ENCODE measurements at regions of chr6 and their contacts with region 1.

Region 1: GRCh38 chr6:43386492-43386891 is 17.0 kb upstream of the ZNF318 start:
- DNase-seq: no peak
- H3K4me3 Mint-ChIP-seq: no peak overlapping the region
- H3K27ac Mint-ChIP-seq: no peak overlapping the region
- H3K4me1 Mint-ChIP-seq: peaks cover 56% of the 10 kb centered on the region
- H3K27me3 Mint-ChIP-seq: peaks cover 43% of the 10 kb centered on the region

Region 2: DNA sequence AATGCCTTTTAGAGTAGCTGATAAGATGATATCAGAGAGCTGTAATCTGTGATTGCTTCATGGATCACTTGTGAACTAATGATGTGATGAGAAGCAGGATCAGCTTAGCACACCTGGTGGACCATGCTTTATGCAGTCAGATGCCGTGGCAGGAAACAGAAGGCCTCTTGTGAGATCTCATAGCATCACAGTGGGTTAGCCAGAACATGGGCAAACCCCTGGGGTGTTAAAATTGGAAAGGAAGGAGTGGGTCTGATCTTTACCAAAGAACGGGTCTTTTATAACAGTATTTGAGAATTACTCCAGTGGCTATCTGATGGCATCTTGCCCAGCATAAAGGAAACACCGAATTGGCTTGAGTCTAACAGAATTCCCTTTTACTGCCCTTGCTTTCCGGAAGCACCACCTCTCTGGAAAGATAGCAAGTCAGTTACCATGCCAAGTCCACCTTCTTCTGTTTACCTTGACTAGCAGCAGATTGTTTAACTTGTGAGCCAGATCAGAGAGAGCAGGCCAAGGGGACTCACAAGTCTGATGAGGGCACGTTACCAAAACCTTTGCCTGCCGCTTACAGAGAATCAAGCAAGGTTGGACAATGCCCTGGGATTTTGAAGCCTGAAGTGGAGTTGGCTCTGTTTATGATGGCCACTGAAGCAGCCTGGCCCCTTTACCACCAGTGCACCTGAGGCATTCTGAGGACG is 236.3 kb before region 1 on chr6:
- intact Hi-C with region 1: no loop called
- DNase-seq: no peak
- H3K4me3 Mint-ChIP-seq: no peak overlapping the region
- H3K27ac Mint-ChIP-seq: no peak overlapping the region
- H3K4me1 Mint-ChIP-seq: no peaks in the 10 kb centered on the region
- H3K27me3 Mint-ChIP-seq: no peaks in the 10 kb centered on the region

Region 3: GRCh38 chr6:43274916-43275597 is 111.4 kb before region 1 on chr6:
- intact Hi-C with region 1: no loop called
- DNase-seq: peak; percentile 10
- H3K4me3 Mint-ChIP-seq: peak overlapping the region; percentile 51
- H3K27ac Mint-ChIP-seq: no peak overlapping the region
- H3K4me1 Mint-ChIP-seq: peaks cover 14% of the 10 kb centered on the region
- H3K27me3 Mint-ChIP-seq: peaks cover 65% of the 10 kb centered on the region

Region 4: GRCh38 chr6:43402820-43403219 is 16.3 kb after region 1 on chr6:
- intact Hi-C with region 1: loop called (anchors 1 kb)
- DNase-seq: no peak
- H3K4me3 Mint-ChIP-seq: no peak overlapping the region
- H3K27ac Mint-ChIP-seq: no peak overlapping the region
- H3K4me1 Mint-ChIP-seq: no peaks in the 10 kb centered on the region
- H3K27me3 Mint-ChIP-seq: peaks cover 37% of the 10 kb centered on the region

Region 5: GRCh38 chr6:43427406-43428111 is 41.1 kb after region 1 on chr6 and contains the start of gene ABCC10:
- intact Hi-C with region 1: loop called (anchors 1 kb)
- DNase-seq: peak; percentile 93
- H3K4me3 Mint-ChIP-seq: peak within 1 kb of the TSS; percentile 96
- H3K27ac Mint-ChIP-seq: peak within 1 kb of the TSS; percentile 96
- H3K4me1 Mint-ChIP-seq: peaks cover 17% of the 10 kb centered on the region
- H3K27me3 Mint-ChIP-seq: no peaks in the 10 kb centered on the region
- total RNA-seq, gene ABCC10: 40.5 and 43.6 TPM in 2 replicates

Region 6: GRCh38 chr6:43454696-43455530 is 68.4 kb after region 1 on chr6:
- intact Hi-C with region 1: loop called (anchors 2 kb)
- DNase-seq: peak; percentile 60
- H3K4me3 Mint-ChIP-seq: peak overlapping the region; percentile 74
- H3K27ac Mint-ChIP-seq: peak overlapping the region; percentile 34
- H3K4me1 Mint-ChIP-seq: peaks cover 11% of the 10 kb centered on the region
- H3K27me3 Mint-ChIP-seq: peaks cover 30% of the 10 kb centered on the region